Dendritic cell treated with granulocyte-macrophage colony-stimulating factor and Interleukin-4, amounts not matched to agents 40 ng/mL and 50 ng/mL, for 4 days (primary cell): ENCODE measurements at regions of chr17 and their contacts with region 1.

Region 1: GRCh38 chr17:35312790-35313711 is 60.4 kb downstream of the SLFN11 start:
- H3K4me3 Mint-ChIP-seq: peak overlapping the region; percentile 74
- H3K27ac Mint-ChIP-seq: peak overlapping the region; percentile 68
- H3K4me1 Mint-ChIP-seq: peaks cover 37% of the 10 kb centered on the region
- H3K27me3 Mint-ChIP-seq: peaks cover 20% of the 10 kb centered on the region

Region 2: GRCh38 chr17:35337364-35337763 is 24.3 kb after region 1 on chr17:
- intact Hi-C with region 1: no loop called
- H3K4me3 Mint-ChIP-seq: no peak overlapping the region
- H3K27ac Mint-ChIP-seq: no peak overlapping the region
- H3K4me1 Mint-ChIP-seq: peaks cover 26% of the 10 kb centered on the region
- H3K27me3 Mint-ChIP-seq: no peaks in the 10 kb centered on the region

Region 3: DNA sequence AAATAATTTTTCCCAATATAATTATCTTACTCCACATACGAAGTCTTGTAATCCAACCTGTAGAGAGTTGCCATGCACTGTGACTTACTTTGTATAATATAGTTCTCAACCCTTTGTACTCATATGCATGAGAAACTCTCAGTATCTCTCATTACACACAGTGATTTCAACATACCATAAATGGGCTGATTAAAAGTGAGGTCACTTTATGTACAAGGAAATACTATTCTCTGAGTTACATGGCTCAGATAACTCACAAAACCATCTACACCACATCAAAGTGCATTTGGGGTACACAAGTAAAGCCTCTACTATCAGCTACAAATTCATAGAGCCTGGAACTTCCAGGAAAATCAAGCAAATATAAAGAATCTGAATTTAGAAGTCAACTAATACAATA is 91.3 kb after region 1 on chr17:
- intact Hi-C with region 1: loop called (anchors 10 kb)
- H3K4me3 Mint-ChIP-seq: no peak overlapping the region
- H3K27ac Mint-ChIP-seq: no peak overlapping the region
- H3K4me1 Mint-ChIP-seq: no peaks in the 10 kb centered on the region
- H3K27me3 Mint-ChIP-seq: peaks cover 2% of the 10 kb centered on the region

Region 4: GRCh38 chr17:35423761-35424160 is 110.7 kb after region 1 on chr17:
- intact Hi-C with region 1: no loop called
- H3K4me3 Mint-ChIP-seq: no peak overlapping the region
- H3K27ac Mint-ChIP-seq: no peak overlapping the region
- H3K4me1 Mint-ChIP-seq: peaks cover 5% of the 10 kb centered on the region
- H3K27me3 Mint-ChIP-seq: no peaks in the 10 kb centered on the region

Region 5: GRCh38 chr17:35486920-35487732 is 174.1 kb after region 1 on chr17:
- intact Hi-C with region 1: loop called (anchors 5 kb)
- H3K4me3 Mint-ChIP-seq: peak overlapping the region; percentile 78
- H3K27ac Mint-ChIP-seq: peak overlapping the region; percentile 83
- H3K4me1 Mint-ChIP-seq: peaks cover 48% of the 10 kb centered on the region
- H3K27me3 Mint-ChIP-seq: peaks cover 84% of the 10 kb centered on the region

Region 6: DNA sequence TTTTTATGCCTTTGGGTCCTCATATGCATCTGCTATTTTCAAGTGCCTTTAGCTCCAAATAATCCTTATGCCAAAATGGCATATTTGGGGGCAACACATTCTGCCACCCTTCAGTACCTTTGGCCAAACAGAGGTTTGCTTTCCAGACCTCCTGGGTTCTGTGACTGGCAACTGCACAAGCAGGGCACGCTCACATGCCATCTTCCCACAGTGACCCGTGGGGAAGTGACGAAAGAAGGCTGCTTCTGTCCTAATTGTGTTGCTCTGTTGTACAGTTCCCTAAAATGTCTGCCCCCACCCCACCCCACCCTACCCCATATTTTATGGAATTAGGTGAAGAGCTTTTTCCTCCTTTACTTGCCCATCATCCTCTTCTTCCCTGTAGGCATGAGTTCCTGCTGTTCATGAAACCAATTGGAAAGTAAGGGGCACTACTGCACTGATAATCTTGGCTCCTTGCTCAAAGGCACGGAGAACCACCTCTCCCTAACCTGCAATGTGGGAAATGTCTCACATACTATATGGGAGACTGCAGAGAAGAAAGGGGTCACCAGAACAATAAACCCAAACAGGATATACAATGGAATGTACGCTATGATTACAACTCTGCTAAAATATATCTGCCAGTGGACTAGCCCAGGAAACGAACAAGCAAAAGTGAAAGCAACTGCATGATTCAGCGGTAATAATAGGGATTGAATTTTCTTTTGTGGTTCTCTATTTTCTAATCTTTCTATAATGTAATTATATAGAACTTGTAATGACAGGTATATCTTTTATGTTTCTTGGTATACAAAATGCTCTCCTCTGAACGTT is 227.7 kb after region 1 on chr17:
- intact Hi-C with region 1: loop called (anchors 1 kb)
- H3K4me3 Mint-ChIP-seq: peak overlapping the region; percentile 72
- H3K27ac Mint-ChIP-seq: peak overlapping the region; percentile 95
- H3K4me1 Mint-ChIP-seq: peaks cover 50% of the 10 kb centered on the region
- H3K27me3 Mint-ChIP-seq: no peaks in the 10 kb centered on the region

Region 7: GRCh38 chr17:35747540-35748017 is 434.5 kb after region 1 on chr17:
- intact Hi-C with region 1: loop called (anchors 10 kb)
- H3K4me3 Mint-ChIP-seq: no peak overlapping the region
- H3K27ac Mint-ChIP-seq: no peak overlapping the region
- H3K4me1 Mint-ChIP-seq: peaks cover 21% of the 10 kb centered on the region
- H3K27me3 Mint-ChIP-seq: peaks cover 57% of the 10 kb centered on the region